Gastrocnemius medialis (tissue), 4 donors: ENCODE measurements at regions of chr3 and their contacts with region 1.

Region 1: DNA sequence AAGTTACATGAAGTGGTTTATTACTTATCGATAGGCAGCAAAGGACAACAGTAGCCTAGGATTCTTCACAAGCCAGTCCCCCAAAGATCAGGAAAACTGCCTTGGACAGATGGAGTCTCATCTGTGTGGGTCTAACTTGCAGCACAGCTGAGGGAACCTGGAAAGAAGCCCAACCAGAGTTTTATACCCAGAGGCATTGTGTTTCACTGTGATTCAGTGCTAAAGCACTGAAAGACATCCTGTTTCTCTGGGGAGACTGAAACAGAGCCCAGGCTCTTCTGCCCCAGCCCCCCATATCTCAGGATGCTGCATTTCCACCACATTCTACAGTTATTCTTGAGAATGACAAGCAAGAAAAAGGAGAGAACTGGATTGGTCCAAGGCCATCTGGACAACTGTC is 48.2 kb upstream of the PYDC2 start:
- DNase-seq: no peak
- ATAC-seq: no peak
- H3K4me3 ChIP-seq: no peak overlapping the region
- H3K27ac ChIP-seq: no peak overlapping the region
- H3K4me1 ChIP-seq: no peaks in the 10 kb centered on the region
- H3K27me3 ChIP-seq: no peaks in the 10 kb centered on the region
- CTCF ChIP-seq: no peak
- POLR2A ChIP-seq: no peak

Region 2: DNA sequence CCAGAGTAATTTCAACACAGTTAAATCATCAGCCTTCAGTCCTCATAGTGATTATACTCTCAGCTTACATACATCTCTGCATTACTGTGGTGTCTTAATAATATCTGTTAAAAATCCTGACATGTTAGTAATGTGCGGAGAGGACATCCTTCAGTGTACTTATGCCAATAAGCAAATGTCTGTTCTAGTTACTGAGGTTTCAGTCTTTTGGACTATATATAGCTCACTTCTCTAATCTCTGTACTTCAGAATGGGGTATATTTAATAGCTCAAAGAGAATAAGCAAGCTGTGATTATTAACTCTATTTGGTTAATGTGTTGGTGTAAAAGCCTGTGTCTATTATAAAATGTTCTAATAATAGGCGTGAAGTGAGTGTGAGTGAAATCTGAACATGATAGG is 242.7 kb before region 1 on chr3:
- in situ Hi-C with region 1: no loop called
- intact Hi-C with region 1: no loop called
- DNase-seq: no peak
- ATAC-seq: no peak
- H3K4me3 ChIP-seq: no peak overlapping the region
- H3K27ac ChIP-seq: no peak overlapping the region
- H3K4me1 ChIP-seq: no peaks in the 10 kb centered on the region
- H3K27me3 ChIP-seq: no peaks in the 10 kb centered on the region
- CTCF ChIP-seq: no peak
- POLR2A ChIP-seq: no peak

Region 3: GRCh38 chr3:191198932-191199331 is 213.8 kb before region 1 on chr3 and contains the start of gene OSTN:
- in situ Hi-C with region 1: no loop called
- intact Hi-C with region 1: no loop called
- DNase-seq: no peak
- ATAC-seq: no peak
- H3K4me3 ChIP-seq: no peak within 1 kb of the TSS
- H3K27ac ChIP-seq: no peak within 1 kb of the TSS
- H3K4me1 ChIP-seq: no peaks in the 10 kb centered on the region
- H3K27me3 ChIP-seq: no peaks in the 10 kb centered on the region
- CTCF ChIP-seq: no peak
- POLR2A ChIP-seq: no peak
- total RNA-seq, gene OSTN: 0.07 TPM in 1 of 4 donors, not detected in the others

Region 4: DNA sequence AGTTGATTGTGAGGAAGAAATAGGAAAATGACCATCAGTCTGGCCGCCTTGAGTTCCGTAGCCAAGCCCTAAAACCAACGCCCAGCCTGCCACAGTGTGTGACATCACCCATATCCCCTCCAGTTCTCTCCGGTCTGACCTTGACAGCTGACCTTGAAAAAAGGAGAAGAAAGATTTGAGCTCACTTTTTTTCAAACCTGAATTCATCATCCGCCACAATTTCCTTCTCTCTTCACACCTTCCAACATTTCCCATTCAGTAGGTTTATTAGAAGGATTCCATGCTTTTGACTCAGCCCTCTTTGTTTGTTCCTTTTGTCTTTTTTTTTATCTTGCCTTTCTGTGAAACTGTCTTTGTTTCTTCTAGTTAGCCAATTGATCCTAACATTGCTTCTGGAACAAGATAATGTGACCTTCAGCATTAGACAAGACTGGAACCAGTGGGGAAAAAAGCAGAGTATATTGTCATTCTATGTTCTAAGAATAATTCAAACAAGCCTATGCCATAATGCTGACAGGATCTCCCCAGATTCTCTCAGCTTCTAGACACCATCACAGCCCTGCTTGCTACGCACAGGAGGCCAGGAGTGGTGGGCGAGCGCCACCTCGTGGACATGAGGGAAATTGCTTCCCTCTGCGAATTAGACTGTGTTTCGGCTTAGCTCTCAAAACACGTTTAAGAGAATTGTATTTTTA is 1031.5 kb after region 1 on chr3:
- in situ Hi-C with region 1: loop called in 3 of 4 experiments (anchors 10 to 25 kb)
- intact Hi-C with region 1: loop called (anchors 10 kb)
- DNase-seq: peak in 1 of 2 donors; percentile 23
- ATAC-seq: peak; percentile 56 to 72
- H3K4me3 ChIP-seq: no peak overlapping the region
- H3K27ac ChIP-seq: no peak overlapping the region
- H3K4me1 ChIP-seq: no peaks in the 10 kb centered on the region
- H3K27me3 ChIP-seq: peaks cover 0 to 19% (median 0%) of the 10 kb centered on the region in 3 donors
- CTCF ChIP-seq: peak; percentile 69 to 97 (median 83)
- POLR2A ChIP-seq: no peak